ENCODE measurements at regions of chr12 and their contacts with region 1.

Region 1: DNA sequence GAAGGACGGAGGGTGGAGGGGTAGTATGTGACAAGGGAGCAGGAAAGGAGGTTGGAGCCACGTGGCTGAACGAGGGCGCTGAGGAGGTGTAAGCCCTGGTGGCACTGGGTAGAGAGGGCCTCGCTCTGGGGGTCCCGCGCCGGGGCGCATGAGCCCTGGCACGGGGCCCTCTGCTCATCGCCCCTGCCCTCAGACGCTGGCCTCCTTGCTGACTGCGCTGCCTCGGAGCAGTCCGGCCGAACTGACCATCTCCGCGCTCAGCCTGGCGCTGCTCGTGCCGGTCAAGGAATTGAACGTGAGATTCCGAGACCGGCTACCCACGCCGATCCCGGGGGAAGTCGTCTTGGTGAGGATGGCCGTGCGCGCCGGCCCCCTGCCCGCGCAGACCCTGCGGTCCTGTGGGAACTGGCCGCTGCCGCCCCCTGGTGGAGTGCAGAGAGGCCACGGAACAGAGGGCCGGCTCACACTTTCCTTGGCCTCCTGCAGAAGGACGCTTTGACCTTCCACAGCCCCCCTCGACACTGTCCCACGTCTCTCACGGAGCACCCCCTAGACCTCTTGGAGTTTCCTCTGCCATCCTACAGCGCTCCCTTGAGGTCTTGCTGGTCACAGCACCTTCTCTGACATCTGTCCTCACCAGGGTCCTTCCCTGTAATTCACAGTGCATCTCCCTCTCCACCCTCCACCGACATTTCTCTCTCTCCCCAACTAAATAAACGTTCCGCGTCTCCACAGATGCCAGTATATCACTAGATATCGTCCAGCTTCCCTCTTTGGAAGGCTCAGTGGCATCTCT is 10.5 kb downstream of the ARHGEF25 start:
- DNase-seq: peak; percentile 96
- H3K4me3 ChIP-seq: peak overlapping the region in 1 of 2 experiments; percentile 41; a peak in 1 of 4 replicates
- H3K27ac ChIP-seq: no peak overlapping the region
- H3K4me1 ChIP-seq: peaks cover 0 to 7% of the 10 kb centered on the region in 2 experiments; a peak in 1 of 4 replicates
- H3K27me3 ChIP-seq: no peaks in the 10 kb centered on the region
- CTCF ChIP-seq: peak; percentile 88
- EP300 ChIP-seq: no peak
- RAD21 ChIP-seq: peak; percentile 76

Region 2: GRCh38 chr12:57552835-57553313 is 68.8 kb before region 1 on chr12:
- CTCF ChIA-PET with region 1: interaction called, 11 read pairs
- POLR2A ChIA-PET with region 1: no interaction called
- DNase-seq: no peak
- H3K4me3 ChIP-seq: peak overlapping the region in 1 of 2 experiments; percentile 24; a peak in 1 of 4 replicates
- H3K27ac ChIP-seq: peak overlapping the region; percentile 13 to 40; a peak in 2 of 4 replicates
- H3K4me1 ChIP-seq: peaks cover 4 to 33% of the 10 kb centered on the region in 2 experiments; a peak in 3 of 4 replicates
- H3K27me3 ChIP-seq: no peaks in the 10 kb centered on the region
- CTCF ChIP-seq: no peak
- EP300 ChIP-seq: no peak
- RAD21 ChIP-seq: no peak

Region 3: DNA sequence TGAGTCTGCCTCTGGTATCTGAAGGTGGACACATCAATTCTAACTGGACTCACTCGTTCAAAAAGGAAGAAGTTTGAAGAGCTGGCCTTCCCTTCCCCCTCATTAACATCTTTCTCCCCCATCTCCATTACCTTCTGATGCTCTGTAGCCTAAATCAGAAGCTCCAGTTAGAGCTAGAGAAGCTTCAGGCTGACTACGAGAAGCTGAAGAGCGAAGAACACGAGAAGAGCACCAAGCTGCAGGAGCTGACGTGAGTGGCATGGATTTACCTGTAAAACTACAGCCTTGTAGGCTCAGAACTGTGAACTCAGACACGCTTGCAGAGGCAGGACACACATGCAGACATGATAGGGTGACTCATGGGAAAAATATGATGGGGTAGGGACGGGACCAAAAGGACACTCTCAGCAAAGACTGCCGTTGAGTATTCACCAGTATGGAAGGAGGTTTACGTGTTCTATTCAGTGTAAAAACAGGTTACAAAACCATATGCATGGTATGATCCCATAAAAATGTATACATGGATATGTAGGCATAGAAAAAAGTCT is 45.0 kb before region 1 on chr12:
- CTCF ChIA-PET with region 1: interaction called, 298 read pairs
- POLR2A ChIA-PET with region 1: no interaction called
- DNase-seq: no peak
- H3K4me3 ChIP-seq: no peak overlapping the region
- H3K27ac ChIP-seq: no peak overlapping the region
- H3K4me1 ChIP-seq: no peaks in the 10 kb centered on the region
- H3K27me3 ChIP-seq: no peaks in the 10 kb centered on the region
- CTCF ChIP-seq: no peak
- EP300 ChIP-seq: no peak
- RAD21 ChIP-seq: no peak

Region 4: DNA sequence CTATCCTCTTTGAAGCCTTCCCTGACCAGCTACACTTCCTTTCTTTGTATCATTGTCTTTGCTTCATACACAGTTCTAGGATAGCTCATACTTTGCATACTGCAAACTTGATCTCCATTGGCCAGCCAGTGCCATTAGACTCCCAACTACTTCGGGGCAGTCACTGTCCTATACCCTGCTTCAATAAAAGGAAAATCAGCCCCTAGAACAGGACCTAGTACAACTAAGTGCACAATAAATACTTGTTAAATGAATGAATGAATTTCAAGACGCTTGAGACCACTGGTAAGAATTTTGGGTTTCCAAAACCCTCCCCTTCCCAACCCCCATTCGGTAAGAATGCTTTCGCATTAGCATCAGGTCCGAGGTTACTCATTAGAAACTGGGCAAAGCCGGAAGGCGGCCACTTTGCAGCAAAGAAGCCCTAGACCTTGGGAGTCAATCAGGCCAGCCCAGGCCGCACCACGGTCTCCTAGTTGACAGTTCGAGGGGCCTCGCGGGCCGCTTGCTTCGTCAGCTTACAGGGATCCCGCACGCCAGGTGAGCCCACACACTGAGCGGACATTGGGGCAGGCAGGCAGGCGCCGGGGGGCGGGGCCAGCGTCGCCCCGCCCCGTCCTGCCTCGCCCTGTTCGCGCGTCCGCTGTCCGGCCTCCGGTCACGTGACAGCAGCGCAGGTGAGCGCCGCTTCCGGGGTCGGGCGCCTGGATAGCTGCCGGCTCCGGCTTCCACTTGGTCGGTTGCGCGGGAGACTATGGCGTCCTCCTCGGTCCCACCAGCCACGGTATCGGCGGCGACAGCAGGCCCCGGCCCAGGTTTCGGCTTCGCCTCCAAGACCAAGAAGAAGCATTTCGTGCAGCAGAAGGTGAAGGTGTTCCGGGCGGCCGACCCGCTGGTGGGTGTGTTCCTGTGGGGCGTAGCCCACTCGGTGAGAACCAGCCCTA is 30.9 kb before region 1 on chr12 and contains the start of gene PIP4K2C:
- CTCF ChIA-PET with region 1: interaction called, 298 read pairs
- POLR2A ChIA-PET with region 1: interaction called, 6 read pairs
- DNase-seq: peak; percentile 90
- H3K4me3 ChIP-seq: peak within 1 kb of the TSS; percentile 89 to 92
- H3K27ac ChIP-seq: peak within 1 kb of the TSS; percentile 6 to 47; a peak in 2 of 4 replicates
- H3K4me1 ChIP-seq: peaks cover 8 to 14% of the 10 kb centered on the region in 2 experiments; a peak in 2 of 4 replicates
- H3K27me3 ChIP-seq: no peaks in the 10 kb centered on the region
- CTCF ChIP-seq: no peak
- EP300 ChIP-seq: no peak
- RAD21 ChIP-seq: no peak
- polyA plus RNA-seq, gene PIP4K2C: 34.2 and 40.1 TPM in 2 replicates

Region 5: DNA sequence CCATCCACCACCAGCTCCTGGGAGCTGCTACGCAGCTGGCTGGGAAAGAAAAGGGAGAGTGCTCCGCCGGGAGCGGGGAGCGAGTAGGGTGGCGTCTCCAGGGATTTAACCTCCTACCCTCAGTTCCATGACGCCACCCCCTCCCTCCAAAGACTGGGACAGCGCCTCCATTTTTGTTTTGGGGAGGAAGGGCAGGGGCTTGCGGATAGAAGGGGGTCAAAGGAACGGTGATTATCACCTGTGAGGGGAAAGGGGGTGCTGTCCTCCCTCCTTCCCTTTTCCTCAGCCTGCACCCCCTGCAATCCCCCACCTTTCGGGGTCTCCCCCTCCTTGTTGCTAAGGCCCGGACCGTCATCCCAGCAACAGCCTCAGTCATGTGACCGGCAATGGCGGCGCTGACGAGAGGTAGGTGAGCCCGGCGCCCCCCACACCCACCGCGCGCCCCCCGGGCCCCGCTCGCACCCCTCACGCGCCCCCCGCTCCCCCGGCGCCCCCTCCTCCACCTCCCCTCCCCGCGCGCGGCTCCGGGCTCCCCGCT is 17.2 kb before region 1 on chr12 and contains the start of gene DTX3:
- CTCF ChIA-PET with region 1: interaction called, 11 read pairs
- POLR2A ChIA-PET with region 1: interaction called, 4 read pairs
- DNase-seq: peak; percentile 84
- H3K4me3 ChIP-seq: peak within 1 kb of the TSS; percentile 86 to 91
- H3K27ac ChIP-seq: peak within 1 kb of the TSS; percentile 61 to 97
- H3K4me1 ChIP-seq: peaks cover 9 to 17% of the 10 kb centered on the region in 2 experiments; a peak in 3 of 4 replicates
- H3K27me3 ChIP-seq: no peaks in the 10 kb centered on the region
- CTCF ChIP-seq: no peak
- EP300 ChIP-seq: no peak
- RAD21 ChIP-seq: no peak
- polyA plus RNA-seq, gene DTX3: 61.2 and 62.6 TPM in 2 replicates

Region 6: DNA sequence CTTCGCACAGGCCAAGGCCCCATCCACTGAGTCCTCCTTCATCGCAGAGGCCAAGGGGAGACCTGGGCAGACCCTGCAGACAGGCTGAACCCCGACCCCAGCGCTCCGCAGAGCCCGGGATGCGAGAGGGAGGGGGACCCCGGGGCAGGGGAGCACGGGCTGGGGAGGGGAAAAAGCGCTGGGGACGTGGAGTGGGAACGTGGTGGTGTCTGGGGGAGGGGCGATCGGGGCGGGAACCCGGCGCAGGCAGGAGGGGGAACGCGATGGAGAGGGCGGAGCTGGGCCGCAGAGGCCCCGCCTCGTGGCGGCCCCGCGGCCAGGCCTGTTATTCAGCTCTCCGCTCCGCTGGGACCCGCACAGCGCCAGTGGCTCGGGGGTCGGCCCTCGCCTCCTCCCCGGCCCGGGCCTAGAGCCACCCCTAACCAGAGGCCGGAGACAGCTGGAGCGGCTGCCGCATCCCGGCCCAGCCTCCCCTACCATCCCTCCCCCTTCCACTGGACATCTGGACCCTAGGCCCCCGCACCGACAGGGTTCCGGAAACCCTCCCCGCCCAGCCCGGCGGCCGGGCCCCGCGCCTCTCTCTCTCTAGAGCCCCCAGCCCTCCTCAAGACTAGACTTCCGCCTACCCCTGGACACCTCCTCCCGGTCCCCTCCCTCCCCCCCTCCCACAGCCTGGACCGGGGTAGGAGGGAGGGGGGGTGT is 10.4 kb before region 1 on chr12 and contains the start of gene ARHGEF25:
- CTCF ChIA-PET with region 1: interaction called, 11 read pairs
- POLR2A ChIA-PET with region 1: interaction called, 4 read pairs
- DNase-seq: peak; percentile 97
- H3K4me3 ChIP-seq: peak within 1 kb of the TSS; percentile 51 to 75
- H3K27ac ChIP-seq: peak within 1 kb of the TSS; percentile 36 to 86; a peak in 3 of 4 replicates
- H3K4me1 ChIP-seq: peaks cover 5 to 29% of the 10 kb centered on the region in 2 experiments; a peak in 2 of 4 replicates
- H3K27me3 ChIP-seq: no peaks in the 10 kb centered on the region
- CTCF ChIP-seq: no peak
- EP300 ChIP-seq: no peak
- RAD21 ChIP-seq: no peak
- polyA plus RNA-seq, gene ARHGEF25: 48.1 and 51.6 TPM in 2 replicates

Region 7: GRCh38 chr12:57657744-57658143 is 36.0 kb after region 1 on chr12:
- CTCF ChIA-PET with region 1: no interaction called
- POLR2A ChIA-PET with region 1: no interaction called
- DNase-seq: no peak
- H3K4me3 ChIP-seq: no peak overlapping the region
- H3K27ac ChIP-seq: no peak overlapping the region
- H3K4me1 ChIP-seq: no peaks in the 10 kb centered on the region
- H3K27me3 ChIP-seq: 0 out of 2 replicates have a peak, but pooled peaks cover 5% of the 10 kb centered on the region
- CTCF ChIP-seq: no peak
- EP300 ChIP-seq: no peak
- RAD21 ChIP-seq: no peak

Region 8: GRCh38 chr12:57735952-57736740 is 114.5 kb after region 1 on chr12:
- CTCF ChIA-PET with region 1: interaction called, 15 read pairs
- POLR2A ChIA-PET with region 1: no interaction called
- DNase-seq: peak; percentile 87
- H3K4me3 ChIP-seq: peak overlapping the region; percentile 29 to 32; a peak in 3 of 4 replicates
- H3K27ac ChIP-seq: peak overlapping the region in 1 of 2 experiments; percentile 39; a peak in 1 of 4 replicates
- H3K4me1 ChIP-seq: peaks cover 0 to 29% of the 10 kb centered on the region in 2 experiments; a peak in 2 of 4 replicates
- H3K27me3 ChIP-seq: no peaks in the 10 kb centered on the region
- CTCF ChIP-seq: peak; percentile 53
- EP300 ChIP-seq: no peak
- RAD21 ChIP-seq: peak; percentile 69